CD4-positive, alpha-beta memory T cell (primary cell): ENCODE measurements at regions of chr2 and their contacts with region 1.

Region 1: DNA sequence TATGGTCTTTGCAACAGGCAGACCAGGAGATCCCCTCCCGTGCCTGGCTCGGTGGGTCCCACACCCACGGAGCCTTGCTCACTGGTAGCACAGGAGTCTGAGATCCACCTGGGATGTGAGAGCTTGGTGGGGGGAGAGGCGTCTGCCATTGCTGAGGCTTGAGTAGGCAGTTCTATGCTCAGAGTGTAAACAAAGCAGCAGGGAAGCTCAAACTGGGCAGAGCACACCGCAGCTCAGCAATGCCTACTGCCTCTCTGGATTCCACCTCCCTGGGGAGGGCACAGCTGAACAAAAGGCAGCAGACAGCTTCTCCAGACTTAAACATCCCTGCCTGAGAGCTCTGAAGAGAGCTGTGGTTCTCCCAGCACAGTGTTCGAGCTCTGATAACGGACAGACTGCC is 85.1 kb downstream of the UGP2 start:
- DNase-seq: no peak
- H3K4me3 ChIP-seq: no peak overlapping the region
- H3K4me3 Mint-ChIP-seq: no peak overlapping the region
- H3K27ac ChIP-seq: no peak overlapping the region
- H3K27ac Mint-ChIP-seq: no peak overlapping the region
- H3K4me1 ChIP-seq: no peaks in the 10 kb centered on the region
- H3K4me1 Mint-ChIP-seq: peaks cover 3 to 11% (median 10%) of the 10 kb centered on the region in 4 donors
- H3K27me3 ChIP-seq: no peaks in the 10 kb centered on the region
- H3K27me3 Mint-ChIP-seq: no peaks in the 10 kb centered on the region

Region 2: DNA sequence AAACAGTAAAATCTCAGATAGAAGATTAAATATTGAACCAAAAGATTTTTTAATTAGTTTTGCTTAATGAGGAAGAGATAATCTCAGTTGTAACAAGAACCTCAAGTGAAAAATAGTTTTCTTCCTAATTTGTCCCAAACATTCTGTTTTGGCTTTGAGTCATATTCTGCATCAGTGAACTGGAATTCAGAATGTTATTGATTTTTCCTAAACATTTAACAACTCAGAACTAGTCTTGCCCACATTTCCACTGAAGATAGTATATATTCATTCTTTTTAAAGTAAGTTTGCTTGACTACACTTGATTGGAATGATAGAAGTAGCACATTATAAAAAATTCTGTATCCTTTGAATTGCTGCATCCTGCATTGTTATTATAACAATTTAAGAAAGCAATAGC is 170.8 kb before region 1 on chr2:
- CTCF ChIA-PET with region 1: no interaction called
- POLR2A ChIA-PET with region 1: no interaction called
- intact Hi-C with region 1: no loop called
- DNase-seq: no peak
- H3K4me3 ChIP-seq: no peak overlapping the region
- H3K4me3 Mint-ChIP-seq: no peak overlapping the region
- H3K27ac ChIP-seq: no peak overlapping the region
- H3K27ac Mint-ChIP-seq: no peak overlapping the region
- H3K4me1 ChIP-seq: no peaks in the 10 kb centered on the region
- H3K4me1 Mint-ChIP-seq: no peaks in the 10 kb centered on the region
- H3K27me3 ChIP-seq: no peaks in the 10 kb centered on the region
- H3K27me3 Mint-ChIP-seq: peaks cover 14 to 18% of the 10 kb centered on the region in 2 donors

Region 3: GRCh38 chr2:63788071-63788470 is 138.7 kb before region 1 on chr2:
- CTCF ChIA-PET with region 1: no interaction called
- POLR2A ChIA-PET with region 1: no interaction called
- intact Hi-C with region 1: no loop called
- DNase-seq: no peak
- H3K4me3 ChIP-seq: no peak overlapping the region
- H3K4me3 Mint-ChIP-seq: no peak overlapping the region
- H3K27ac ChIP-seq: no peak overlapping the region
- H3K27ac Mint-ChIP-seq: no peak overlapping the region
- H3K4me1 ChIP-seq: no peaks in the 10 kb centered on the region
- H3K4me1 Mint-ChIP-seq: no peaks in the 10 kb centered on the region
- H3K27me3 ChIP-seq: no peaks in the 10 kb centered on the region
- H3K27me3 Mint-ChIP-seq: peaks cover 0 to 3% of the 10 kb centered on the region in 2 donors

Region 4: GRCh38 chr2:63950414-63950813 is 23.6 kb after region 1 on chr2:
- CTCF ChIA-PET with region 1: no interaction called
- POLR2A ChIA-PET with region 1: no interaction called
- intact Hi-C with region 1: loop called (anchors 5 kb)
- DNase-seq: no peak
- H3K4me3 ChIP-seq: no peak overlapping the region
- H3K4me3 Mint-ChIP-seq: peak overlapping the region in 1 of 8 donors; percentile 31
- H3K27ac ChIP-seq: no peak overlapping the region
- H3K27ac Mint-ChIP-seq: no peak overlapping the region
- H3K4me1 ChIP-seq: no peaks in the 10 kb centered on the region
- H3K4me1 Mint-ChIP-seq: peaks cover 0 to 4% (median under 1%) of the 10 kb centered on the region in 4 donors
- H3K27me3 ChIP-seq: no peaks in the 10 kb centered on the region
- H3K27me3 Mint-ChIP-seq: no peaks in the 10 kb centered on the region